Caco-2 (cell line): ENCODE measurements at regions of chr16 and their contacts with region 1.

Region 1: GRCh38 chr16:66872943-66873684 is 7.2 kb upstream of the PDP2 start:
- DNase-seq: peak; percentile 88 to 93
- H3K4me3 ChIP-seq: peak overlapping the region; percentile 46
- H3K4me3 Mint-ChIP-seq: peak overlapping the region; percentile 80
- H3K27ac Mint-ChIP-seq: peak overlapping the region; percentile 46
- H3K4me1 ChIP-seq: peaks cover 18% of the 10 kb centered on the region
- H3K4me1 Mint-ChIP-seq: peaks cover 20% of the 10 kb centered on the region
- H3K27me3 ChIP-seq: no peaks in the 10 kb centered on the region; the same call in 1 of the 2 replicates
- H3K27me3 Mint-ChIP-seq: no peaks in the 10 kb centered on the region
- CTCF ChIP-seq: peak; percentile 95 to 98

Region 2: GRCh38 chr16:66650707-66651473 is 222.2 kb before region 1 on chr16:
- CTCF ChIA-PET with region 1: interaction called, 12 read pairs
- POLR2A ChIA-PET with region 1: no interaction called
- intact Hi-C with region 1: no loop called
- DNase-seq: peak; percentile 75 to 86
- H3K4me3 ChIP-seq: no peak overlapping the region
- H3K4me3 Mint-ChIP-seq: peak overlapping the region; percentile 42
- H3K27ac Mint-ChIP-seq: no peak overlapping the region
- H3K4me1 ChIP-seq: peaks cover 19% of the 10 kb centered on the region; the same call in 1 of the 2 replicates
- H3K4me1 Mint-ChIP-seq: peaks cover 24% of the 10 kb centered on the region
- H3K27me3 ChIP-seq: no peaks in the 10 kb centered on the region
- H3K27me3 Mint-ChIP-seq: no peaks in the 10 kb centered on the region
- CTCF ChIP-seq: peak; percentile 92 to 96

Region 3: DNA sequence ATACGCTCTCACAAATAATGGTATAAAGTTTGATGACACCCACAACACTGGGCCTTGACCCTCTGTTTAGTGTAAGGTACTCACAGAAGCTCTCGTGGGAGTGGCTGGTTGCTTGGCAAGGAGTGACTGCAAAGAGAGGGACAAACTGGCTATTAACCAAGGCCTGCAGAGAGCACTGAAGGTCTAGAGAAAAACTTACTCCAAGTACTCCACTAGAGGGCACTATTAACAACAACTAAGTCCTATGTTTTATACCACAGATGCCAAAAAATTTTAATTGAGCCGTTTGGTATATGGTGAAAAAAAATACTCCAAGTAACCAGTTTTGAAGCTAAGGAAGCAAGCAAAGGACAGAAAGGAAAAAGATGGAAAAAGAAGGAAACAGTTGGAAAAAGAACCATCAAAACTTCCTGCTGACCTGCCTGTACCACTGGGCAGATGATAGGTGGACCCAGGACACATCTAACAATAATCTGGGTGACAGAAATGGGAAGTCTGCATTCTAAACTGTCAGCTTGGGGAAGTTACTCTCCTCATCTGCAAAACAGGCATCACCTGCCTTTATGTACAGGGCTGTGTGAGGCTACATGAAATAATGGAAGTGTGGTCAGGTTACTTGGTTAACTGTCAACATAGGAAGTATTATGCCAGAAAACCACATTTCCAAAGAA is 144.9 kb before region 1 on chr16:
- CTCF ChIA-PET with region 1: interaction called, 3 read pairs
- POLR2A ChIA-PET with region 1: no interaction called
- intact Hi-C with region 1: loop called (anchors 10 kb)
- DNase-seq: peak in 1 of 2 experiments; percentile 35
- H3K4me3 ChIP-seq: no peak overlapping the region
- H3K4me3 Mint-ChIP-seq: no peak overlapping the region
- H3K27ac Mint-ChIP-seq: no peak overlapping the region
- H3K4me1 ChIP-seq: no peaks in the 10 kb centered on the region
- H3K4me1 Mint-ChIP-seq: peaks cover 6% of the 10 kb centered on the region
- H3K27me3 ChIP-seq: no peaks in the 10 kb centered on the region
- H3K27me3 Mint-ChIP-seq: no peaks in the 10 kb centered on the region
- CTCF ChIP-seq: peak; percentile 47 to 67

Region 4: DNA sequence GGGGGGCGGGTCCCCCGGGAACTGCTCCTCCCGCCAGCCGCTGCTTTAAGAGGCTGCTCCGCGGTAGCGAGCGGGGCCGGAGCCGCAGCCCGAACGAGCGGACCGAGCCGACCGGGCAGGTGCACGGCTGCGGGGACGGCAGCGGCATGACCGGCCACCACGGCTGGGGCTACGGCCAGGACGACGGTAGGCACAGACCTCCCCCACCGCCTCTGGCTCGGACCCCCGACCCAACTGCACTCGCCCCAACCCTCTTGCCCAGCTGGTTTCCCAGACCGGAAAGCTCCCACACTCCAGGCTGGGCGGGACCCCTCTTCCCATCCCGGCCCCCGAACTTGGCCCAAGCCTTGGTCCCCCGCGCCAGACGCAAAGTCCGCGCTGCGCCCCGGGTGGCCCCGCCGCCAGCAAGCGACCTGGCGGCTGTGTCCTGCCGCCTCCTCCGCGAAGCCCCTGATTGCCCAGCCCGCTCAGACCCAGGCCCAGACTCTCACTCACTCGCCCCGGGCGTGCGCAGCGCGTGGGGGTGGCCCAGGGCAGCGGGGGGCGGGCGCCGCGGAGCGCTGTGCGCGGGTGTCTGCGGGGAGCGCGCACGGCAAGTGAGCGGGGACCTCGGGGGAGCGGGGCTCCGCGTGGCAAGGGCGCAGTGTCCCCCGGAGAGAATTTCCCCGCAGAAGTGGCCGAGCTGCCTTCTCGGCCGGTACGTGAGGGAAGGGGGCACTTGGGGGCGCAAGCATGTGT is 28.6 kb before region 1 on chr16 and contains the start of gene CA7:
- CTCF ChIA-PET with region 1: interaction called, 16 read pairs
- POLR2A ChIA-PET with region 1: no interaction called
- intact Hi-C with region 1: no loop called
- DNase-seq: peak in 1 of 2 experiments; percentile 33
- H3K4me3 ChIP-seq: peak within 1 kb of the TSS; percentile 43
- H3K4me3 Mint-ChIP-seq: peak within 1 kb of the TSS; percentile 68
- H3K27ac Mint-ChIP-seq: no peak within 1 kb of the TSS
- H3K4me1 ChIP-seq: peaks cover 23% of the 10 kb centered on the region
- H3K4me1 Mint-ChIP-seq: peaks cover 21% of the 10 kb centered on the region
- H3K27me3 ChIP-seq: no peaks in the 10 kb centered on the region; the same call in 1 of the 2 replicates
- H3K27me3 Mint-ChIP-seq: peaks cover 13% of the 10 kb centered on the region
- CTCF ChIP-seq: no peak
- total RNA-seq, gene CA7: 0.35 and 0.68 TPM in 2 replicates

Region 5: GRCh38 chr16:66858740-66859396 is 14.2 kb before region 1 on chr16:
- CTCF ChIA-PET with region 1: interaction called, 15 read pairs
- POLR2A ChIA-PET with region 1: no interaction called
- intact Hi-C with region 1: no loop called
- DNase-seq: no peak
- H3K4me3 ChIP-seq: no peak overlapping the region
- H3K4me3 Mint-ChIP-seq: no peak overlapping the region
- H3K27ac Mint-ChIP-seq: no peak overlapping the region
- H3K4me1 ChIP-seq: peaks cover 30% of the 10 kb centered on the region
- H3K4me1 Mint-ChIP-seq: peaks cover 12% of the 10 kb centered on the region
- H3K27me3 ChIP-seq: no peaks in the 10 kb centered on the region
- H3K27me3 Mint-ChIP-seq: no peaks in the 10 kb centered on the region
- CTCF ChIP-seq: no peak